ENCODE measurements at regions of chr20 and their contacts with region 1.

Region 1: DNA sequence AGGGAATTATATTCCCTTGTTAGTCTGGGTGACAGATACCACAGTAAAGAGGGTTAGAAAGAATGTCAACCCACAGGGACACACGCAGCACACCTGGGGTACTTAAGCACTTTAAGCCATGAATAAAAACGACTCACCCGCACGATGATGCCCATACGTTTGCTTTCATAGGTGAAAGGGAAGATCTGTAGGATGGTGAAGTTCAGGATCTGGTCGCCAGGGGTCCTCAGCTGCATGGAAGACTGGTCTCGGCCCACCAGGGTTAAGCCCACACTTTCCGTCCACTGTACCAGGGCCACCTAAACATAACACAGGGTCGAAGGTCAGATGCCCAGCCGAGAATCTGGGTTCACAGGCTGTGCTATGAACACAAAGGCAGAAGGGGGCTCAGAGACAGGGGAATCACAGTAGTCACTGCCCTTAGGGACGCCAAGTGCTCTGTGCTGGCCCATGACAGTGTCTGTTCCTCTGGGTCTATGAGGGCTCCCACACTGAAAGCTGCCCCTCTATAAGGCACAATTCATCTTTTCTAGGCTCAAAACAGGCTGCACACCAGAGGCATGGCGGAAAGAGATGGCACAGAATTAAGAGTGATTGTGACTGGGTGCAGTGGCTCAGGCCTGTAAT is 96.8 kb upstream of the NFATC2 start:
- DNase-seq: no peak
- H3K4me3 ChIP-seq: no peak overlapping the region
- H3K27ac ChIP-seq: no peak overlapping the region
- H3K4me1 ChIP-seq: peaks cover 0 to 6% (median 3%) of the 10 kb centered on the region in 4 donors
- H3K27me3 ChIP-seq: no peaks in the 10 kb centered on the region
- CTCF ChIP-seq: peak; percentile 70 to 84 (median 75)
- EP300 ChIP-seq: no peak
- POLR2A ChIP-seq: no peak

Region 2: DNA sequence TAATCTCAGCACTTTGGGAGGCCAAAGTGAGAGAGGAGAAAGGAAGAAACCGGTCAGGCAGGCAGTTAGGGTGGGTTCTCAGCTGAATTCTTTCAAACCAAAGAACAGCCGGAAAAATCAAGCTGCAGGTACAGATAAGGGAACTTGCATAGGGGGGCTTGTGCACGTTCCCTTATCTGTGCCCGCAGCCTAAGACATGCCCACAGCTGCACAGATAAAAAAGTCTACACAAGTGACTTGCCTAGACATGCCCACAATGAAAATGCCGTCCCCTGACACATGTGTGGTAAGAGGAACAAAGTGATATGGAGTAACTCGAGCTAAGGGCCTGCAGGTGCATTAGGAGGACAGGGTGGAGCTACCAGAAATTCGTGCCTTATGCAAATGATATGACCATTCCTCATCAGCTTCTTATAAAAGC is 338.8 kb after region 1 on chr20:
- intact Hi-C with region 1: loop called (anchors 10 kb)
- DNase-seq: no peak
- H3K4me3 ChIP-seq: no peak overlapping the region
- H3K27ac ChIP-seq: no peak overlapping the region
- H3K4me1 ChIP-seq: no peaks in the 10 kb centered on the region
- H3K27me3 ChIP-seq: no peaks in the 10 kb centered on the region
- CTCF ChIP-seq: no peak
- EP300 ChIP-seq: no peak
- POLR2A ChIP-seq: no peak